AG04450 (cell line): ENCODE measurements at regions of chr20 and their contacts with region 1.

Region 1: DNA sequence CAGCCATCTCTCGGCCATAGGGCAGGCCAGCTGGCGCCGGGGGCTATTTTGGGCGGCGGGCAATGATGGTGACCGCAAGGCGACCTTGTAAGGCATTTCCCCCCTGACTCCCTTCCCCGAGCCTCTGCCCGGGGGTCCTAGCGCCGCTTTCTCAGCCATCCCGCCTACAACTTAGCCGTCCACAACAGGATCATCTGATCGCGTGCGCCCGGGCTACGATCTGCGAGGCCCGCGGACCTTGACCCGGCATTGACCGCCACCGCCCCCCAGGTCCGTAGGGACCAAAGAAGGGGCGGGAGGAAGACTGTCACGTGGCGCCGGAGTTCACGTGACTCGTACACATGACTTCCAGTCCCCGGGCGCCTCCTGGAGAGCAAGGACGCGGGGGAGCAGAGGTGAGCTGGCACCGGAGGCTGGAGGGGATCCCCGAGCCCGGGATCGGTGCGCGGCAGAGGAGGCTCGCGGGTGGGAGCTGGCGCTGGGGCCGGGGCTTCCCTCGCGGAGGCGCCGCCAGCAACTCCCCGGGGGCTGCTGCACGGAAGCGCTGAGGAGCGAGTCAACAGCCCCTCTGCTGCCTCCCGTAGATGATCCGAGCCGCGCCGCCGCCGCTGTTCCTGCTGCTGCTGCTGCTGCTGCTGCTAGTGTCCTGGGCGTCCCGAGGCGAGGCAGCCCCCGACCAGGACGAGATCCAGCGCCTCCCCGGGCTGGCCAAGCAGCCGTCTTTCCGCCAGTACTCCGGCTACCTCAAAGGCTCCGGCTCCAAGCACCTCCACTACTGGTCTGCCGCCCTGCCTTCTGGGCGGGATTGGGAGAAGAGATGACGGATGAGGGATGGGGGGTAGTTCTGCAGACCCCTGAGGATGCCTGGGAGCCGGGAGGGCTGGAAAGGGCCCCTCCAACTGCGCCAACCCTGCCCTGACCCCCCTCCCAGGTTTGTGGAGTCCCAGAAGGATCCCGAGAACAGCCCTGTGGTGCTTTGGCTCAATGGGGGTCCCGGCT is at the starts of genes CTSA and NEURL2:
- DNase-seq: peak; percentile 84
- H3K4me3 ChIP-seq: peak within 1 kb of the TSS; percentile 79
- H3K27ac ChIP-seq: peak within 1 kb of the TSS; percentile 77
- H3K27me3 ChIP-seq: no peaks in the 10 kb centered on the region
- CTCF ChIP-seq: no peak
- polyA plus RNA-seq, gene CTSA: 234 and 267 TPM in 2 replicates
- polyA plus RNA-seq, gene NEURL2: 1.1 and 1.9 TPM in 2 replicates

Region 2: DNA sequence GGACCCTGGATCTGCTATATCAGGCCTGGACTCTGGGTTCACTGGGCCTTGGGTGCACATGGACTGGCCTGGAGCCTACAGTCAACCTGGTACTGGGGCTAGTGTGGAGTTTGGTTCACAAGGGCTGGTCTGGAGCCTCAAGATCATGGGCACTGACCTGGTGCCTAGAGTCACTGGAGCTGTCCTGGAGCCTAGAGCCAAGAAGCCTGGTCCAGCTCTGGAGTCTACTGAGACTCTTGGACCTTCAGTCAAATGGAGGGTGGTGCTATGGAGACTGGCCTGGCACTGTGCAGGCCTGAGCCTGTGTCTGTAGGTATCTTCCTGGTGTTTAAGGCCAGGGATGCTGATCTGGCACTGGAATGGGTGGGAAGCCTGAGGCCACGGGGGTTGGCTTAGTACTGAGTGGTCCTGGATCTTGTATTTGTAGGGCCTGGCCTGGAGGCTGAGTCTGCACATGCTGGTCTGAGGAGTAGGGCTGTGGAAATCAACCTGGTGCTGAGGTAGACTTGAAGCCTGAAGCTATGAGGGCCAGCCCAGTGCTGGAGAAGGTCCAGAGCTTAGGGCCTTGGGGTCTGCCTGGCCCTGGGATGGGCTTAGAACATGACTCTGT is 243.7 kb before region 1 on chr20:
- CTCF ChIA-PET with region 1: no interaction called
- POLR2A ChIA-PET with region 1: no interaction called
- DNase-seq: no peak
- H3K4me3 ChIP-seq: no peak overlapping the region
- H3K27ac ChIP-seq: no peak overlapping the region
- H3K27me3 ChIP-seq: no peaks in the 10 kb centered on the region
- CTCF ChIP-seq: no peak

Region 3: DNA sequence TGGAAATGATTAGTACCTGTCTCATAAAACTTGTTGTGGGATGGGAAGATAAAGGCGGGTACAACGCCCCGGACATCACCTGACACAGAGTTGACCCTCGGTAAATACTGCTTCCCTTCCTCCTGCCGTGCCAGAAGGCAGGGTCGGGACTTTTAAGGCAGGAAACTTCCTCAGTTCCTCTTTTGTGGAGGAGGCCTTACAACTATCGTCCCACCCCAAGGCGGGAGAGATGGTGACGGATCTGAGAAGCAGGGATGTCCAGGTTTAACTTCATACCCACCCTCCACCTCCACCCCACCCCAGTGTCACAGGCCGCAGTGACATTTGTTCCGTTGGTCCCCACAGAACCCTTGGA is 99.0 kb before region 1 on chr20:
- CTCF ChIA-PET with region 1: no interaction called
- POLR2A ChIA-PET with region 1: no interaction called
- DNase-seq: no peak
- H3K4me3 ChIP-seq: peak overlapping the region; percentile 91
- H3K27ac ChIP-seq: peak overlapping the region; percentile 31
- H3K27me3 ChIP-seq: no peaks in the 10 kb centered on the region
- CTCF ChIP-seq: no peak

Region 4: DNA sequence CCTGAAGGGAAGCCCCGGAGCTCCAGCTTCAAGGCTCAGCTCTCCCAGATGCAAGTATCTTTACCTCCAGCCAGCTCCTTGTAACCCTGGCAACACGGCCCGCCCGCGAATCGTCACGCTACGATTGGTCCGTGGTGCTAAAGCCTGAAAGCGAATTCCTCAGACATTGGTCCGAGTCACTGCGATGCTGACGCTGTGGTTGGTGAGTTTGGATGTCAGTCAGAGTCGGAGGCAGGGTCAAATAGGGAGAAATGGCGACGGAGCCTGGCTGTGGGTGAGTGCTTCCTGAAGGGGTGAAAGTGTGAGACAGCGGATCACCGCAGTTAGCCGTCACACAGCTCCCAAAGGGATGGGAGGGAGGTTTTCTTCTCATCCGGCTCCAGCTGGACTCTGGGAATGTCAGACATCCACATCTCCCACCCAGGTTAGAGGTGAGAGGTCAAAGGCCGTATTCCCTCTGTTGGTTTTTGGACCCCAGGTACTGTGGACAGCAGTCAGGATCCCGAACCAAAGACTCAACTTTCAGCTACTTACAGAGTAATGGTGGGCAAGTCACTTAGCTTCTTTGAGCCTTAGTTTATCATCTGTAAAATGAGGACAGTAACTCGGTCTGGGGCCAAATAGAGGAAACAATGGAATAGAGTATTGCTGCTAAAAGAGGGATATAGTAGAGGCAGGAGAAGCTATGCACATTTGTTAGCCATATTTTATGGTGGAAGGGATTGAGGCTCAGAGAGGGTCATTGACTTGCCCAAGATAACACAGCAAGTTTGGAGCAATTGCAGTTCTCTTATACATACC is 10.1 kb before region 1 on chr20 and contains the start of gene ZSWIM1:
- CTCF ChIA-PET with region 1: interaction called, 19 read pairs
- POLR2A ChIA-PET with region 1: interaction called, 16 read pairs
- DNase-seq: peak; percentile 98
- H3K4me3 ChIP-seq: peak within 1 kb of the TSS; percentile 96
- H3K27ac ChIP-seq: peak within 1 kb of the TSS; percentile 21
- H3K27me3 ChIP-seq: no peaks in the 10 kb centered on the region
- CTCF ChIP-seq: no peak
- polyA plus RNA-seq, gene ZSWIM1: 5.3 and 6.5 TPM in 2 replicates

Region 5: DNA sequence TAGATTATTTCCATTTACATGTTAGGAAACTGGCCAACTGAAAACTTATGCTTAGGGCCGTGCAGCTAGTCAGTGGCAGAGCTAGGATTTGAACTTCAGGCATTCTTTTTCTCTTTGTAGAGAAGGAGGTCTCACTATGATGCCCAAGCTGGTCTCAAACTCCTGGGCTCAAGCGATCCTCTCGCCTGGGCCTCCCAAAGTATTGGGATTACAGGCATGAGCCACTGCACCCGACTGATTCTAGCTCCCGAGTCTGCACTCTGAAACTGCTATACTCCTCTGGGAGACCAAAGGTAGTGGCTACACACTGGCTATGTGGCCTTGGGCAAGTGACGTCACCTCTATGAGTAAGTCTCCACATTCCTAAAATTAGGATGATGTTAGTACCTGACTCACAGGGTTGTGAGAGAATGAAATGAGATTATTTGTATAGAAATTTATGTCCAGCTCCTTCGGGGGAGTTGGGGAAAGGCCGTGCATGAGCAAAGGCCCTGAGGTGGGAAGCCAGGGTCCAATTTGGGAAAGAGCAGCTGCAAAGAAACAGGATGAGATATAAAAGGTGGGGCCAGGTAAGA is 14.3 kb after region 1 on chr20:
- CTCF ChIA-PET with region 1: interaction called, 11 read pairs
- POLR2A ChIA-PET with region 1: interaction called, 20 read pairs
- DNase-seq: no peak
- H3K4me3 ChIP-seq: no peak overlapping the region
- H3K27ac ChIP-seq: peak overlapping the region; percentile 65
- H3K27me3 ChIP-seq: no peaks in the 10 kb centered on the region
- CTCF ChIP-seq: no peak

Region 6: GRCh38 chr20:45910670-45911485 is 19.6 kb after region 1 on chr20:
- CTCF ChIA-PET with region 1: interaction called, 11 read pairs
- POLR2A ChIA-PET with region 1: interaction called, 20 read pairs
- DNase-seq: peak; percentile 99
- H3K4me3 ChIP-seq: peak overlapping the region; percentile 69
- H3K27ac ChIP-seq: peak overlapping the region; percentile 75
- H3K27me3 ChIP-seq: no peaks in the 10 kb centered on the region
- CTCF ChIP-seq: no peak

Region 7: DNA sequence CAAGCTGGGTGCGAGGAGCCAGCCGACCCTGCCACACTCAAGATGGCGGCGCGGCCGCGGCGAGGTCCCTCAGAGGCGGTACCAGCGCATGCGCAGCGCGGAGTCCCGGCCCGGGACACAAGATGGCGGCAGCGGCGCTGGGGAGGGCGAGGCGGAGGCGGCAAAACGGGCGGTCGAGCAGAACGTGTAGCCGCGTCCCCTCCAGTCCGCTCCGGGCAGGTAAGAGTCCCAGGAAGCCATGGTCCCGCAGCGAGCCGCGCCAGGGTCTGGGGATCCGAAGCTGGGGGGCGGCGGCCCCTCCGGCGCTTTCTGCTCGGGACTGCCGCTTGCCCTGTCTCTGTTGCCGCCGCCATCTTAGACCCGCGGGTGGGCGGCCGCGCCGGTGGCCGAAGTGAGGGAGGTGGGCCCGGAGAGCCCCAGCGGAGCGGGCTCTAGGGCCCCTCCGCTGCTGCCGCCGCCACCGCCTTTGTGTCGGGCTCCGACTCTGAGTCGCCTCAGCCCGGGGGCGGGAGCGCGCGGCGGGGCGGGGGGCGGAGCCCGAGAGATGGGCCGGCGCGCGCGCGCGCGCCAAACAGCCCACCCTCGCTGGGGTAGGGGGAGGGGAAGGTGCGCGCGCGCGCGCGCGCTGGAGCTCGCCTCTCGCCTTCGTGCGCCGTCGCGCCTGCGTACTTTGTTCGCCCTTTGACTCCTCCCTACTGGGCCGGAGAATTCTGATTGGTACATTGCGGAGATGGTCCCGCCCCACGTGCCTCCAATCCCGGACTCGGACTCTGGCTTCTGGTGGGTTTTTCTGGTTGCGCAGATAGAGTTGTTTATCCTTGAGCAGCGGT is 43.5 kb after region 1 on chr20 and contains the start of gene PCIF1:
- CTCF ChIA-PET with region 1: interaction called, 11 read pairs
- POLR2A ChIA-PET with region 1: interaction called, 21 read pairs
- DNase-seq: peak; percentile 98
- H3K4me3 ChIP-seq: peak within 1 kb of the TSS; percentile 92
- H3K27ac ChIP-seq: peak within 1 kb of the TSS; percentile 98
- H3K27me3 ChIP-seq: no peaks in the 10 kb centered on the region
- CTCF ChIP-seq: no peak
- polyA plus RNA-seq, gene PCIF1: 11.5 and 14.6 TPM in 2 replicates

Region 8: GRCh38 chr20:45963059-45964005 is 72.0 kb after region 1 on chr20:
- CTCF ChIA-PET with region 1: interaction called, 31 read pairs
- POLR2A ChIA-PET with region 1: no interaction called
- DNase-seq: no peak
- H3K4me3 ChIP-seq: no peak overlapping the region
- H3K27ac ChIP-seq: no peak overlapping the region
- H3K27me3 ChIP-seq: no peaks in the 10 kb centered on the region
- CTCF ChIP-seq: peak; percentile 37